A673 (cell line): ENCODE measurements at regions of chr1 and their contacts with region 1.

Region 1: DNA sequence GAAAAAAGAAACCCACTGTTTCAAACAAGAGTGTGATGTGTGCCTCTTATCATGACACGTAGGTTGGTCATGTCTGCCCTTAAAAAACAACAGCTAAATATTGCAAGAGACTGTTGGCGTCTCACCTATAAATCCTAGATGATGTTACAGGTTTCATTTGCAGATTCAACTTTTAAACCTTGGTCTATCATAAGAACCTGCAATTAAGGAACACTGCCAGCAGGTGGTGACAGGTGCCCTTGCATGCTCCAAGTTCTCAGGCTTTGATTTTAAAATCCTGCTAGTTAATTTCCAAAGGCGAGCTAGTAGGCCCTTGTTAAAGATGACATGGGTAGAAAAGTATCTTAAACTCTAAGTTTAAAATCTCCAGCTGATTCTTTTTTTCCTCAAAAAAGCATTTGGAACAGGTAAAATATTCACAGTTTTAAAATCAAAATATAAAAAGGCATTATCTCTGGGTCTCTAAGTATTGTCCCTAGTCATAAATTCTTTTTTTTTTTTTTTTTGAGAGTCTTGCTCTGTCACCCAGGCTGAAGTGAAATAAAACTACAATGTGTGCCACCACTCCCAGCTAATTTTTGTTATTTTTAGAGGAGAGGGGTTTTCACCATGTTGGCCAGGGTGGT is 39.1 kb downstream of the CLSTN1 start:
- DNase-seq: peak; percentile 65
- H3K4me3 ChIP-seq: no peak overlapping the region
- H3K27ac ChIP-seq: no peak overlapping the region
- H3K4me1 ChIP-seq: peaks cover 8% of the 10 kb centered on the region
- H3K27me3 ChIP-seq: no peaks in the 10 kb centered on the region
- CTCF ChIP-seq: peak; percentile 71

Region 2: DNA sequence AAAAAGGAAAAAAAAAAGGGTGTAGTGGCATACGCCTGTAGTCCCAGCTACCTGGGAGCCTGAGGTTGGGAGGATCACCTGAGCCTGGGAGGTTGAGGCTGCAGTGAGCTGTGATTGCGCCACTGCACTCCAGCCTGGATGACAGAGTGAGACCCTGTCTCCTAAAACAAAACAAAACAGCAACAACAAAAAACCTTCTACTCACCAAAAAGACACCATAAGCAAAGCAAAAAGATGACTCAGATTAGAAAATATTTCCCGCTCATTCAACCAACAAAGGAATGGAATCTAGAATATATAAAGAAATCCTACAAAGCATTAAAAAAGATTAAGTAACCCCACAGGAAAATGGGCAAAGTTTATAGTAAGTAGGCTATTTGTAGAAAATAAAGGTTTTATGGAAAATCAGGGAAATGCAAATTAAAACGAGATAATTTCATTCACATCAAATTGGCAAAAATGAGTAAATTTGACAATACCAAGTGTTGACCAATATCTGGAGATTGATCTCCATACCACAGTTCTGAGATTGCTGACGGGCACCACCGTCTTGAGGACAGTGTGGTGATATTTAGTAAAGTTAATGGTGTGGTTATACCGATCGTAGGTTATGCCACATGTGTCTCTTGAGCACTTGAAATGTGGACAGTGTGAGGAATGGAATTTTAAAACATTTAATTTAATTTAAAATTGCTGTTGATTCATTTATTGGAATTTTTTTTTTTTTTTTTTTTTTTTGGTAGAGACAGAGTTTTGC is 79.1 kb before region 1 on chr1:
- CTCF ChIA-PET with region 1: no interaction called
- POLR2A ChIA-PET with region 1: no interaction called
- intact Hi-C with region 1: no loop called
- DNase-seq: peak; percentile 40
- H3K4me3 ChIP-seq: no peak overlapping the region
- H3K27ac ChIP-seq: no peak overlapping the region
- H3K4me1 ChIP-seq: no peaks in the 10 kb centered on the region
- H3K27me3 ChIP-seq: no peaks in the 10 kb centered on the region
- CTCF ChIP-seq: no peak

Region 3: DNA sequence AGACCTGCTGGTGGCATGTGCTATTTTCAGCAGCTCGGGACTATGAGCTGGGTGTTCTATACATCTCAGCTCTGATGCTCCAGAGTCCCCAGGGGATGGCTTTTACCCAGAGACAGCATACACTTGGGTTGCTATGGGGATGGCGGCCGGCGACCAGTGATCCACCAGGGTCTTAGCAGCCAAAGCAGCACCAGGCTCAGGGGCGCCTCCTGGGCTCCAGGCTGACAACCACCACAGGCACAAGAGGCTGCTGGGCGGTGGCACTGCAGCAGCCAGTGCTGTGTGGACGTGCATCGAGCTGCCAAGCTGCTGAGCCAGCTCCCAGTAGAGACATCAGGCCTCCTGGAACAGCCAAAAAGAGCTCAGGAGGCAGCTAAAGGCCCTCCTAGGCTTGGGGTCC is 76.7 kb after region 1 on chr1:
- CTCF ChIA-PET with region 1: interaction called, 4 read pairs
- POLR2A ChIA-PET with region 1: no interaction called
- intact Hi-C with region 1: loop called (anchors 1 kb)
- DNase-seq: no peak
- H3K4me3 ChIP-seq: no peak overlapping the region
- H3K27ac ChIP-seq: no peak overlapping the region
- H3K4me1 ChIP-seq: peaks cover 8% of the 10 kb centered on the region
- H3K27me3 ChIP-seq: no peaks in the 10 kb centered on the region
- CTCF ChIP-seq: no peak

Region 4: GRCh38 chr1:10101929-10102328 is 317.3 kb after region 1 on chr1:
- CTCF ChIA-PET with region 1: no interaction called
- POLR2A ChIA-PET with region 1: no interaction called
- intact Hi-C with region 1: no loop called
- DNase-seq: no peak
- H3K4me3 ChIP-seq: no peak overlapping the region
- H3K27ac ChIP-seq: no peak overlapping the region
- H3K4me1 ChIP-seq: no peaks in the 10 kb centered on the region
- H3K27me3 ChIP-seq: no peaks in the 10 kb centered on the region
- CTCF ChIP-seq: no peak; the same call in 1 of the 2 replicates